GM12878 (cell line): ENCODE measurements at regions of chr6 and their contacts with region 1.

Region 1: DNA sequence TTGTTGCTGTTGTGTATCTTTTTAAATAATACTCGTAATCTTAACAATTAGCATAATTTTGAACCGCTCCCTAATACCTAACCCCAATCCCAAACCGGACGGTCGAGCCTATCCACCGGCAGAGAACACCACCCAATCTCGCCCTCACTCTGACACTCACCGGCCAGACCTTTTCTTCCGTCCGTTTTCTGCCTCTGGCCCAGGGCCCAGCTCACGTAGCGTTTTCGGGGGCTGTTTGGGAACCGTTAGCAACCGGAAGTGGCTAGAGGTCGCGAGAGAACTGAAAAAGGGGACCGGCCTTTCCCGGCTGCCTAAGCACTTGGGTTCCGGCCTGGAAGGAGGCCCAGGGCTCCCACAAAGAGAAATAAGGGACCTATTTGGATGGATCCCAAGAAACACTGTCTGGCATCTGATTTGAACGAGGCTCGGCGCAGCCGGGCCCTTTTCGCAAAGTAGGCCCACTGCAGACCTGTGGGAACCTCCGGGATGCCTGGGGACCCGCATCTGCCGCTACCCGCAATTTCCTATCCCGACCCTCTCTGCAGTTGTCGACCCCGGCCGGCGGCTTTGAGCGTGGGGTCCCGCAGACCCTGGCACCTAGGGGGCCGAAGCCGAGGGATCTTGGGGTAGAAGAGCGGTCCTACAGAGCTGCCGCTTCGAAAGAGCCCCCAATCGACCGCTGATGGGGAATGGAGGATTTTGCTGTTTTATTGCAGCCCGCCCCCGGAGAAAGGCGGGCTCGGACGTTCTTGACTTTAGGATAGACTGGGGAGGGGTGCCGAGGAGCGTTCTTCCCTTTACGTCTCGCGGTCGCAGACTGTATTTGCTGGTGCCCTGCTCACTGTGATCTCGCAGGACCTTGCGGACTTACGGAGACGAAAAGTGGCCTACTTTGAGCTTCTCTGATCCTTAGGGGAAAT is 4.8 kb upstream of the ZKSCAN8 start:
- DNase-seq: peak; percentile 56
- ATAC-seq: peak; percentile 77
- H3K4me3 ChIP-seq: peak overlapping the region; percentile 88
- H3K27ac ChIP-seq: peak overlapping the region; percentile 92
- H3K4me1 ChIP-seq: peaks cover 20% of the 10 kb centered on the region
- H3K27me3 ChIP-seq: no peaks in the 10 kb centered on the region
- CTCF ChIP-seq: no peak
- EP300 ChIP-seq: peak in 1 of 2 experiments; percentile 57; a peak in 1 of 4 replicates
- POLR2A ChIP-seq: peak; percentile 89
- RAD21 ChIP-seq: peak; percentile 25; the same call in 1 of the 2 replicates

Region 2: GRCh38 chr6:27902335-27903314 is 234.2 kb before region 1 on chr6:
- CTCF ChIA-PET with region 1: no interaction called
- POLR2A ChIA-PET with region 1: interaction called, 3 read pairs
- RAD21 ChIA-PET with region 1: interaction called, 5 read pairs
- SMC1A ChIA-PET with region 1: interaction called, 3 read pairs
- in situ Hi-C with region 1: no loop called
- intact Hi-C with region 1: loop called (anchors 5 kb)
- DNase-seq: peak; percentile 84
- ATAC-seq: peak; percentile 82
- H3K4me3 ChIP-seq: peak overlapping the region; percentile 82
- H3K27ac ChIP-seq: peak overlapping the region; percentile 77
- H3K4me1 ChIP-seq: peaks cover 13% of the 10 kb centered on the region; the same call in 1 of the 2 replicates
- H3K27me3 ChIP-seq: no peaks in the 10 kb centered on the region
- CTCF ChIP-seq: no peak
- EP300 ChIP-seq: peak in 1 of 2 experiments; percentile 73; a peak in 2 of 4 replicates
- POLR2A ChIP-seq: no peak
- RAD21 ChIP-seq: no peak

Region 3: GRCh38 chr6:28124102-28124970 is 12.5 kb before region 1 on chr6 and contains the start of gene ZSCAN16:
- CTCF ChIA-PET with region 1: interaction called, 18 read pairs
- POLR2A ChIA-PET with region 1: interaction called, 5 read pairs
- RAD21 ChIA-PET with region 1: interaction called, 13 read pairs
- SMC1A ChIA-PET with region 1: interaction called, 11 read pairs
- in situ Hi-C with region 1: no loop called
- intact Hi-C with region 1: loop called (anchors 1 kb)
- DNase-seq: no peak
- ATAC-seq: peak; percentile 100
- H3K4me3 ChIP-seq: peak within 1 kb of the TSS; percentile 76
- H3K27ac ChIP-seq: peak within 1 kb of the TSS; percentile 59
- H3K4me1 ChIP-seq: peaks cover 8% of the 10 kb centered on the region
- H3K27me3 ChIP-seq: no peaks in the 10 kb centered on the region
- CTCF ChIP-seq: no peak
- EP300 ChIP-seq: no peak
- POLR2A ChIP-seq: peak; percentile 87
- RAD21 ChIP-seq: no peak
- polyA plus RNA-seq, gene ZSCAN16: 10.5 to 13.8 TPM

Region 4: DNA sequence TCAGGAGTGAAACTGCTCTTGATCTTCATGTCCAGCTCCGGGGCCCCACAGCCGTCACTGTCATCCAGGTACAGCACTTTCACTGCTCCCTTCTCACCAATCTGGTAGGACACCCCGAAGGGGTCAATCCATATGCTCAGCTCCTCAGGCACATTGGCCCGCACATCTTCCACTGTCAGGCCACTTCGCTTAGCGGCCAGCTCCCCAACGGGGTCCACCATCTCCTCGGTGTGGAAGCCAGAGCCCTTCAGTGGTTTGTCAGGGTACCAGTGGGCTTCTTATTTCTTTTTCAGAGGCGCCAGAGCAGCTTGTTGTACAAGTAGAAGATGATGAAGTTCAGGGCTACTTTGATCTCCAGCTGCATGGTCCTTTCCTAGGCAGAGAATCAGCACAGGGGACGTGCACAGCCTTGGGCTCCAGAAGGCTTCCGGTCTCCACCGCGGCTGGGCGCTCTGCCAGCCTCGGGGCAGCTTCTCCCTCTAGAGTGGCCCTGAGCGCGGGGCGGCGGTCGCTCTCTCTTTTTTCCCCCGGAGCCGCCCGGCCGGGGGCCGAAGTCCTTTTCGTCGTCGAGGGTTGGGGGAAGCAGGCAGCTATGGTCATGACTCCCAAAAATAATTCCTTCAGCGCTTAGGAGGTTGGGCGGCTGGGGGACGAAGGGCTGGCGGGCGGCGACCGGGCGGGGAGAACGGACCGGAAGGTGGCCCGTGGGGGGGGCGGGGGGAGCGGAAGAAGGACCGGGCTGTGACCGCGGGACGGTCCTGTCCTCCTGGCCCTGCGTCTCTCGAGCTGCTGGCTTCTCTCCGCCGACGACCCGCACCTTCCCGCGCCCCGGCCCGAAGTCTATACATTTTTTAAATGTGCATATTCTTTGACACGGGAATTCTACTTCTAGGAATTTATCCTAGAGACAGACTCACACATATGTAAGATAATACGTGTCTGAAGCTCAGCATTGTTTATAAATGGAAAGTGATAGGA is 81.7 kb after region 1 on chr6:
- CTCF ChIA-PET with region 1: interaction called, 6 read pairs
- POLR2A ChIA-PET with region 1: interaction called, 4 read pairs
- RAD21 ChIA-PET with region 1: interaction called, 7 read pairs
- SMC1A ChIA-PET with region 1: interaction called, 10 read pairs
- in situ Hi-C with region 1: loop called (anchors 5 kb)
- intact Hi-C with region 1: loop called (anchors 5 kb)
- DNase-seq: no peak
- ATAC-seq: peak; percentile 97
- H3K4me3 ChIP-seq: peak overlapping the region; percentile 83
- H3K27ac ChIP-seq: no peak overlapping the region
- H3K4me1 ChIP-seq: peaks cover 3% of the 10 kb centered on the region; the same call in 1 of the 2 replicates
- H3K27me3 ChIP-seq: no peaks in the 10 kb centered on the region; a peak in 1 of 4 replicates
- CTCF ChIP-seq: no peak
- EP300 ChIP-seq: no peak
- POLR2A ChIP-seq: peak; percentile 67
- RAD21 ChIP-seq: no peak

Region 5: GRCh38 chr6:28252009-28252975 is 115.4 kb after region 1 on chr6 and contains the start of gene ZKSCAN4:
- CTCF ChIA-PET with region 1: interaction called, 3 read pairs
- POLR2A ChIA-PET with region 1: no interaction called
- RAD21 ChIA-PET with region 1: interaction called, 11 read pairs
- SMC1A ChIA-PET with region 1: interaction called, 13 read pairs
- in situ Hi-C with region 1: no loop called
- intact Hi-C with region 1: loop called (anchors 1 kb)
- DNase-seq: peak; percentile 67
- ATAC-seq: peak; percentile 93
- H3K4me3 ChIP-seq: peak within 1 kb of the TSS; percentile 99
- H3K27ac ChIP-seq: peak within 1 kb of the TSS; percentile 55
- H3K4me1 ChIP-seq: no peaks in the 10 kb centered on the region
- H3K27me3 ChIP-seq: no peaks in the 10 kb centered on the region
- CTCF ChIP-seq: no peak
- EP300 ChIP-seq: no peak
- POLR2A ChIP-seq: peak; percentile 52
- RAD21 ChIP-seq: peak; percentile 35
- polyA plus RNA-seq, gene ZKSCAN4: 3.0 to 3.3 TPM

Region 6: DNA sequence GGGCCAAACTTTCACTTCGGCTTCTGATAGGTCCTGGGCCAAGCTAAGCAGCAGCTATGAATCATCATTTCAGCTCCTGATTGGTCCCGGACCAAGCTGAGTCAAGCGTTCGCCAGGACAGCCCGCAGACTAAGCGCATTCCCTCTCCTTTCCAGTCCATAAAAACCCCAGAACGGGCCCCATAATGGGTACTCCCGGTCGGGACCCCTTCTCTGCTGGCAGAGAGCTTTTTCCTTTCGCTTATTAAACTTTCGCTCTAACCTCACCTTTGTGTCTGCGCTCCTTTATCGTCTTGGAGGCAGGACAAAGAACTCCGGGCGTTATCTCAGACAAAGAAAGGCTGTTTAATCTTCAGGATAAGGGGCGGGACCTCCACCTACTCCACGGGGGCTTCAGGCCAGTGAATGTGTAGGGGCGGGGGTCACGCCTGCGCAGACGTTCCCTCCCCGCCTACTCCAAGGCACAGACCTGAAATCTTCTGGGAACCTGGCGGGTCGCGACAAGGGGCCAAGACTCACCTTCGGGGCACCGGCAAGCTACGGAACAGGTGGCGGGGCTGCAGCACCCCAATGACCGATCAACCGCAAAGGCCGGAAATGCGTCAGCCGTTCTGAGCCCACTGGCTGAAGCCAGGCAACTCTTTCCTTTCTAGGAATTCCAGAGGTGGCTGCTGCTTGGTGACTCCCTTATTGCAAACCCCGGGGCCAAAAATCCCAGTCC is 198.9 kb after region 1 on chr6 and contains the start of gene ZSCAN31:
- CTCF ChIA-PET with region 1: interaction called, 4 read pairs
- POLR2A ChIA-PET with region 1: interaction called, 3 read pairs
- RAD21 ChIA-PET with region 1: interaction called, 4 read pairs
- SMC1A ChIA-PET with region 1: no interaction called
- in situ Hi-C with region 1: no loop called
- intact Hi-C with region 1: loop called (anchors 1 kb)
- DNase-seq: peak; percentile 73
- ATAC-seq: peak; percentile 96
- H3K4me3 ChIP-seq: peak within 1 kb of the TSS; percentile 72
- H3K27ac ChIP-seq: peak within 1 kb of the TSS; percentile 97
- H3K4me1 ChIP-seq: peaks cover 14% of the 10 kb centered on the region
- H3K27me3 ChIP-seq: no peaks in the 10 kb centered on the region
- CTCF ChIP-seq: no peak
- EP300 ChIP-seq: no peak
- POLR2A ChIP-seq: peak; percentile 85
- RAD21 ChIP-seq: no peak
- polyA plus RNA-seq, gene ZSCAN31: 1.6 to 2.0 TPM